ENCODE measurements at regions of chr21 and their contacts with region 1.

Region 1: GRCh38 chr21:15064576-15065391 is at the start of gene NRIP1:
- DNase-seq: peak; percentile 81
- H3K4me3 Mint-ChIP-seq: peak within 1 kb of the TSS; percentile 84
- H3K27ac Mint-ChIP-seq: peak within 1 kb of the TSS; percentile 86
- H3K4me1 Mint-ChIP-seq: peaks cover 45% of the 10 kb centered on the region
- H3K27me3 Mint-ChIP-seq: peaks cover 16% of the 10 kb centered on the region
- total RNA-seq, gene NRIP1: 4.4 to 5.4 TPM

Region 2: DNA sequence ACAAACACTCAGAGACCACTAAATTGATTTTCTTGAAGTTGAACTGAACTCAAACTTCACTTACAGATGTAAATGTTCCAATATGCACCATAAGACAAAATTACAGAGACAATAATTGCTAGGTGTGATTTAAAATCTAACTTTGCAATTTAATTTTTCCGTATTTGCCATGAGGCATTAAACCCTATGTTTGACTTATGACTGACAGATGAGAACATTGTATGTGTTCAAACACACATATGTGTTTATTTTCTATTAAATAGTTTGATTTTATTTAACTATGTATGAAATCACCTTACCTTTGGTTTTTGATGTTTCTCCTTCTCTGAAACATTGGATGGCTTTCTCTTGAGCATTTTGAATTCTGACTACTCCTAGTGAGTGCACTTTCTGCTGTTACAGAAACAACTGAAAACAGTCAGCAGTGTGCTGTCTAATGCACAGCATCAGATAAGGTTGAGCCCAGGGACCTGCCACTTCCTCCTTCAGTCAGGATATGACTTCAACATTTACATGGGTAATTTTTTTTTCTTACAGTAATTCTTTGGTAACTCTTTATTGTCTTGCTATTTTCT is 518.8 kb before region 1 on chr21 and contains the start of gene SAMSN1:
- CTCF ChIA-PET with region 1: no interaction called
- POLR2A ChIA-PET with region 1: no interaction called
- intact Hi-C with region 1: loop called (anchors 5 kb)
- DNase-seq: peak; percentile 83
- H3K4me3 Mint-ChIP-seq: peak within 1 kb of the TSS; percentile 89
- H3K27ac Mint-ChIP-seq: peak within 1 kb of the TSS; percentile 95
- H3K4me1 Mint-ChIP-seq: peaks cover 49% of the 10 kb centered on the region
- H3K27me3 Mint-ChIP-seq: no peaks in the 10 kb centered on the region
- total RNA-seq, gene SAMSN1: 47.5 to 48.4 TPM

Region 3: DNA sequence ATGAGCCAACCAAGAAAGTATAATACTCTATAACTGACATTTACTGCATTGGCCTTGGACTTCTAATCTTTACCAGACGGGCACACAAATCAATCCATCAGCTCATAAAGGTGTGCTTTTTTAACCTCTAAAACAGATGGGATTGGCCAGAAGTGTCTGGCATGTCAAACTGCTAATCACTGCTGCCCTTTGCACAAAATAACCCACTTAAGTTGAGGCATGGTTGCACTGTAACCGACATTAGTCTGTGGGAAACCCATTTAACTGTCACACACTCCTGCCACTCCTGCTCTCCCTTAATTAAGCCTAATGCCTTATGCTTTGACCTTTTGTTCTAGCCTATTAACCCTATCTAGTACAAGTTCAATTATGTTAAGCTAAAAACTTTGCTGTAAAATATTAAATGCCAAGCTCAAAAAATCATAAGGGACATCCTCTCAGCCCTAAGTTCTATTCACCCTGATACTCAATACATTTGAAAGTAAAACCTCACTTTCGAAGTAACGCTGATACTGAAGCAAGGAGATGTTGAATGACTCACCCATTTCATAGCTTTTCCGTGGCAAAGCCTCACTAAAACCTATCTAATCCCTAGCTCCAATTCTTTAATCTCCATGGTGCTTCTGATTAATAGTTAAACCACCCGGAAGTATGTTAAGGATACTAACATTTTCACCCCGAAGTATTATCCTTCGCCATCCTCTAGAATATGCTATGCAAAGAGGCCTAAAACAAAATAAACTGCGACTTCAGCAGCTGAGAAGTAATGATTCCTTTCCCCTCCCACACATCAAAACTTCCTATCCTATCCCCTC is 12.9 kb before region 1 on chr21:
- CTCF ChIA-PET with region 1: interaction called, 4 read pairs
- POLR2A ChIA-PET with region 1: interaction called, 8 read pairs
- intact Hi-C with region 1: loop called (anchors 1 kb)
- DNase-seq: no peak
- H3K4me3 Mint-ChIP-seq: peak overlapping the region; percentile 53
- H3K27ac Mint-ChIP-seq: peak overlapping the region; percentile 40
- H3K4me1 Mint-ChIP-seq: peaks cover 49% of the 10 kb centered on the region
- H3K27me3 Mint-ChIP-seq: no peaks in the 10 kb centered on the region

Region 4: GRCh38 chr21:15437883-15438282 is 373.1 kb after region 1 on chr21:
- CTCF ChIA-PET with region 1: no interaction called
- POLR2A ChIA-PET with region 1: no interaction called
- intact Hi-C with region 1: loop called (anchors 5 kb)
- DNase-seq: no peak
- H3K4me3 Mint-ChIP-seq: no peak overlapping the region
- H3K27ac Mint-ChIP-seq: no peak overlapping the region
- H3K4me1 Mint-ChIP-seq: peaks cover 13% of the 10 kb centered on the region
- H3K27me3 Mint-ChIP-seq: no peaks in the 10 kb centered on the region

Region 5: GRCh38 chr21:15729674-15730483 is 665.1 kb after region 1 on chr21 and contains the start of gene USP25:
- CTCF ChIA-PET with region 1: no interaction called
- POLR2A ChIA-PET with region 1: no interaction called
- intact Hi-C with region 1: loop called (anchors 5 kb)
- DNase-seq: peak; percentile 89
- H3K4me3 Mint-ChIP-seq: peak within 1 kb of the TSS; percentile 83
- H3K27ac Mint-ChIP-seq: peak within 1 kb of the TSS; percentile 77
- H3K4me1 Mint-ChIP-seq: peaks cover 20% of the 10 kb centered on the region
- H3K27me3 Mint-ChIP-seq: peaks cover 2% of the 10 kb centered on the region
- total RNA-seq, gene USP25: 31.2 to 31.7 TPM

Measured in activated CD4-positive, alpha-beta memory T cell treated with anti-CD3 and anti-CD28 coated beads for 36 hours (primary cell).